A549 (cell line): ENCODE measurements at regions of chr19 and their contacts with region 1.

Region 1: DNA sequence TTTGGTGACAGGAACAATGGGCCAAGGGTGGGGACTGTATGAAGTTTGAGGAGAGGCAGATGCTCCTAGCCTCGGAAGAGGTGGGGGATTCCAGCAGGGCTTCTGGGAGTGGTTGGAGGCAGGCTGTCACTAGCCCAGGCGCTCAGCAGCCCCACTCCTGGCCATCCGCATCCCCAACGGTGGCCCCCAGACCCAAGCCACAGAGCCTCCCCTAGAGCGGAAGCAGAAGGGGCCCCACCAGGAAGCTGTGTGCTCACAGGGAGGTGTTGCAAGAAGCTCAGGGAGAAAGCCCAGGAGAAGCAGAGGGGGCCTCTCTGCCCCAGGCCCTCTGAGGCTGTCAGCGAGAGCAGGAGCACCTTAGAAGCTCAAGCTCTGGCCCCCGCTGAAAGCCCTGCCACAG is 8.3 kb downstream of the PRAM1 start:
- DNase-seq: no peak
- ATAC-seq: no peak
- H3K4me3 ChIP-seq: no peak overlapping the region
- H3K27ac ChIP-seq: no peak overlapping the region
- H3K4me1 ChIP-seq: no peaks in the 10 kb centered on the region
- CTCF ChIP-seq: no peak
- EP300 ChIP-seq: no peak
- POLR2A ChIP-seq: no peak
- RAD21 ChIP-seq: no peak

Region 2: DNA sequence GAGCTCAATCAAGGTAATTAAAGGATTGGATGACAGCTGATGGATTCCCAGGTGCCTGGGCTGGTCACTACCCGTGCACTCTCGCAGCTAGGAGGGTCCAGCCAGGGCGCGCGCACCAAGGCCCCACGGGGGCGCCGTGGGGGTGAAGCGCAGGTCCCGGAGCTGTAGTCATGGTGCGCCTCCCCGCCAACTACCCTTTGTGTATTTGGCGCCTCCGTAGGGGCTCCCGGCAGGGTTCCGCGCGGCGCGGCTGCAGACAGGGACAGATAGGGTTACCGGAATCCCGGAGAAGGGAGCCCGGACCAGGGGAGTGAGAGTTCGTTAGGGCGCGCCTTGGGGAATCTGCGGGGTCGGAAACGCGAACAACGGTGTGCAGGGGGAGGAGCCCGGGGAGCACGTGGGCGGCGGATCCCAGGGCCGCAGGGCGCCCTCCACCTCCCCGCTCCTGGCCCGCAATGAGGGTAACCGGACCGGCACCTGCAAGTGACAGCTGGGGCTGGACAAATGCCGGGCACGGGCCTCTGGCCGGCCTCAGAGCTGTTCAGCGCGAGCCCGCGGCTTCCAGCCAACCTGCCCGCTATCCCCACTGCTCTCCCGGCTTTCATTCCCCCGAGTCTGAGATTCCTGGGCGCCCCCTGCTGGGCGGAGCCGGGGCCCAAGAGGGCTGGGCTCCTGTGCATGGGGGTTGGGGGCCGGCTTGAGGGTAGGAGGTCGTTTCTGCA is 11.7 kb after region 1 on chr19:
- CTCF ChIA-PET with region 1: interaction called, 18 read pairs
- POLR2A ChIA-PET with region 1: no interaction called
- DNase-seq: peak; percentile 71 to 81
- ATAC-seq: peak; percentile 86 to 91
- H3K4me3 ChIP-seq: peak overlapping the region; percentile 61
- H3K27ac ChIP-seq: peak overlapping the region; percentile 87 to 99
- H3K4me1 ChIP-seq: peaks cover 10% of the 10 kb centered on the region; the same call in 2 of the 3 replicates
- CTCF ChIP-seq: peak; percentile 73
- EP300 ChIP-seq: no peak
- POLR2A ChIP-seq: no peak
- RAD21 ChIP-seq: peak; percentile 69 to 76

Region 3: GRCh38 chr19:8517551-8518442 is 23.6 kb after region 1 on chr19:
- CTCF ChIA-PET with region 1: no interaction called
- POLR2A ChIA-PET with region 1: no interaction called
- DNase-seq: no peak
- ATAC-seq: no peak
- H3K4me3 ChIP-seq: no peak overlapping the region
- H3K27ac ChIP-seq: peak overlapping the region in 1 of 2 experiments; percentile 43; a peak in 1 of 6 replicates
- H3K4me1 ChIP-seq: peaks cover 9% of the 10 kb centered on the region
- CTCF ChIP-seq: no peak
- EP300 ChIP-seq: no peak
- POLR2A ChIP-seq: no peak
- RAD21 ChIP-seq: no peak